ENCODE measurements at regions of chr20 and their contacts with region 1.

Region 1: DNA sequence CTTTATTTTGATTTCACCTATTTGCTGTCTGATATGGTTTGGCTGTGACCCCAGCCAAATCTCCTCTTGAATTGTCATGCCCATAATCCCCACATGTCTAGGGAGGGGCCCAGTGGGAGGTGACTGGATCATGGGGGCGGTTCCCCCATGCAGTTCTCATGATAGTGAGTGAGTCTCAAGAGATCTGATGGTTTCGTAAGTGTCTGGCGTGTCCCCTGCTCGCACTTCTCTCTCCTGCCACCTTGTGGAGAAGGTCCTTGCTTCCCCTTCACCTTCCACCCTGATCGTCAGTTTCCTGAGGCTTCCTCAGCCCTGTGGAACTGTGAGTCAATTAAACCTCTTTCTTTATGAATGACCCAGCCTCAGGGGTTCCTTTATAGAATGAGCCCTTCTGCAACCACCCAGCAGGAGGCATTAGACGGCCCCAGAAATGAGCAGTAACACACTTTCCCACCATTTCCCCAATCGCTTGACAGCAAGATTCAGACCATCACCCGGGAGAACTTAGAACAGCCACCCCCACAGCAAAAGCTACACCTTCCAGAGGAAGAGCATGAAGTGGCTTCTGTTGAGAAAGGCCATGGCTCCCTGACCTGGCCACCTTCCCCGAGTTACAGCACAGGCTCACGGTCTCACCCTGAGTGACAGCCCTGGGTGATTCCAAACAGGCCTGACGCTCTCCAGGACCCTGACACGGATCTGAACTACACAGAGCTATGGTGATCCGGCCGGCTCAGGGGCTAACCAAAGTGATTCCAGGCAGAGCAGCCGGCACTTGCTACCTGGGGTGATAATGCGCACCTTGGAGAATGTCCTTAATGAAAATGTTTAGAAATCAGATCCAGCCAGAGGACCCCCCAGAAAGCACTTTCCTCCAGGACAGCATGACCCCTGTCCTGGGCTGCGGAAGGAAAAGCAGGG is 131.2 kb upstream of the CDH4 start:
- DNase-seq: peak; percentile 71
- H3K4me3 Mint-ChIP-seq: no peak overlapping the region
- H3K27ac Mint-ChIP-seq: no peak overlapping the region
- H3K4me1 Mint-ChIP-seq: peaks cover 4% of the 10 kb centered on the region
- H3K27me3 Mint-ChIP-seq: no peaks in the 10 kb centered on the region

Region 2: GRCh38 chr20:59469267-59470252 is 1651.3 kb before region 1 on chr20:
- intact Hi-C with region 1: no loop called
- DNase-seq: no peak
- H3K4me3 Mint-ChIP-seq: no peak overlapping the region
- H3K27ac Mint-ChIP-seq: no peak overlapping the region
- H3K4me1 Mint-ChIP-seq: no peaks in the 10 kb centered on the region
- H3K27me3 Mint-ChIP-seq: peaks cover 3% of the 10 kb centered on the region

Region 3: GRCh38 chr20:60210779-60211617 is 909.9 kb before region 1 on chr20:
- intact Hi-C with region 1: loop called (anchors 10 kb)
- DNase-seq: peak; percentile 87
- H3K4me3 Mint-ChIP-seq: no peak overlapping the region
- H3K27ac Mint-ChIP-seq: no peak overlapping the region
- H3K4me1 Mint-ChIP-seq: no peaks in the 10 kb centered on the region
- H3K27me3 Mint-ChIP-seq: no peaks in the 10 kb centered on the region

Region 4: GRCh38 chr20:60718743-60719322 is 402.0 kb before region 1 on chr20:
- intact Hi-C with region 1: no loop called
- DNase-seq: no peak
- H3K4me3 Mint-ChIP-seq: no peak overlapping the region
- H3K27ac Mint-ChIP-seq: no peak overlapping the region
- H3K4me1 Mint-ChIP-seq: no peaks in the 10 kb centered on the region
- H3K27me3 Mint-ChIP-seq: no peaks in the 10 kb centered on the region

Measured in activated CD4-positive, alpha-beta T cell treated with anti-CD3 and anti-CD28 coated beads, Interleukin-2, amount 10 ng/mL, durations not matched to agents 24 days and 14 days (primary cell).